GM10248 (cell line): ENCODE measurements at regions of chr5 and their contacts with region 1.

Region 1: GRCh38 chr5:131263648-131264450 is at the start of gene CDC42SE2:
- DNase-seq: peak; percentile 87
- CTCF ChIP-seq: no peak

Region 2: GRCh38 chr5:131252824-131253171 is 11.1 kb before region 1 on chr5:
- CTCF ChIA-PET with region 1: interaction called, 17 read pairs
- POLR2A ChIA-PET with region 1: interaction called, 5 read pairs
- DNase-seq: peak; percentile 55
- CTCF ChIP-seq: no peak

Region 3: DNA sequence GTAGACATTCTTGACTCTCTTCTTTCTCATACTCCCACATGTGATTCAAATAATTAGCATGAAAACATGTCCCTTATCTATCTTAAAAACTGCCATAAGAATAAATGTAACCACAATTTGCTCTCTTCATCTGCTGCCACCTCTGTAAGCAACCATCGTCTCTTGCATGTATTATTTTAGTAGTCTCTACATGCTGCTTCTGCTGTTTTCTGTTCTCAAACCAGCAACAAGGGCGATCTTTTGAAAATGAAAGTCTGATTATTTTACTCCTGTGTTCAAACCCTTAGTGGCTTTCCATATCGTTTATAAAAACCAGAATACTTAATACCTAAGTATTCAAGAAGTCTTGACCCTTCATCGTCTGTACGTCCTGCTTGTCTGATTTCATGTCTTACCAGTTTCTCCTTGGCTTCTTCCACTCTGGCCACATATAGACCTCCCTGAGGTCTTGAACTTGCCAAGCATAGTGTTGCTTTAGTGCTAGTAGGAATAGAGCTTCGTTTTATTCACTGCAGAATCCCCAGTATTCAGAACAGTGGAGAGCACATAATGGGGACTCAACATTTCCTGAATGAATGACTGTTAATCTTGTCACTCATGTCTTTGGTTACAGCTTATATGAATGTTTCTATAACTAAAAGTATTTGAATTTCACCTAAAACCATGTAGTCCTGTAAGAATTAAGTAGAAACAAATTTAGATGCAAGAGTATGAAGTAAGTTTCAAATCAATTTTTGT is 10.6 kb after region 1 on chr5:
- CTCF ChIA-PET with region 1: interaction called, 16 read pairs
- POLR2A ChIA-PET with region 1: interaction called, 6 read pairs
- DNase-seq: no peak
- CTCF ChIP-seq: no peak

Region 4: DNA sequence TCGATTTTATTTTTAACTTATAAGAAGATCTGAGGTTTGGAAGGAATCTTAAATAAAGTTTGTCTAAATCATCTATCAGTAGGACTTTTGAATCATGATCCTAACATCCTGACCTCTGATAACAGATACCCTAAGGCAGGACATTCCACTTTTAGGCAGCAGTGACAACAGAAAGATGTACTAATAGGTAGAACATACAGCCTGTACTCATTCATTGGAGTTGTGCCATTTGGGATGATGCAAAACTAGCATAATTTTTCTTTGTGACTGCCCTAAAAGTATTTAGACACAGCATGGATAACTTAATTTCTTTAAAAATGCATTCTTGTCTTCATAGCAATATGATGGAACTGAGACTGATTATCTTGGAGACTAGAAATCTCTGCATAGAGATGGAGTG is 39.7 kb after region 1 on chr5:
- CTCF ChIA-PET with region 1: no interaction called
- POLR2A ChIA-PET with region 1: no interaction called
- DNase-seq: no peak
- CTCF ChIP-seq: no peak

Region 5: DNA sequence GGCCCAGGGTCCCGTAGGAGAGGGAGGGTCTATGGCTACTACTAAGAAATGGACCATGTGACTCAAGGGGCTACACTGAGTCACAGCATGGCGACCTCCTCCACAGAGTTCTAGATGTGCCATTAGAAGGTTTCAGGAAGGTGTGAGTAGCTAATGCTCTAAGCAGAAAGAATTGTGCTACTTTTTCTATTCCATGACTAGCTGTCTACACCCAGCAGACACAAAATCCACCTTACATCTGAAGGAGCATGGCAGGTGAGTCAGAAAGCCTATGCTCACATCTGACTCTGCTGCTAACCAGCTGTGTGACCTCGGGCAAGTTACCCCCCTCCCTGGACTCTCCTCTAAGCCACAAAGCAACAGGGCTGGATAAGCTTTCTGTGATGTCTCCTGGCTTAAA is 696.1 kb after region 1 on chr5:
- CTCF ChIA-PET with region 1: no interaction called
- POLR2A ChIA-PET with region 1: no interaction called
- DNase-seq: no peak
- CTCF ChIP-seq: no peak